ENCODE measurements at regions of chr3 and their contacts with region 1.

Region 1: DNA sequence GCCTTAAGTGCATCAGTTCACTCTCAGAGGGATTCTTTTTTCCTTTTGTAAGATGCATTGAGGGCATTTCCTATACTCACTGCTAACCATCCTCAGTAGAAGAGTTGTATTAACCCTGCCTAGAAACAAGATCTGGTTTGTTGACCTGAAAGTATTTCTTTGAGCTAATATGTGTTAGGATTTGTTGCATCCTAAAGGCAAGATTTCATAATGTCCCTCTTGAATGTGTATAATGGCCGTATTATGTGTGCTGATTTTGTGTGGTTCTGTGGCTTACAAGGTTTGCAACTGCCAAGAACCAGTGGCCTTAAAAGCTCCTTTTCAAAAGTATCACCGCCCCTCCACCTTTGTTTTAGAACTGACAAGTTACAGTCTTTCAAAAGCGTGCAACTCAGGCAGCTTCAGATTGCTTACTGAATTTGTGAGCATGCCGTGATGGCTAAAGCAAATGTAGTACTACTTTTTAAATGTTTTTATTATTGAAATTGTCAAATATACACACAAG is 182.0 kb upstream of the BHLHE40 start:
- DNase-seq: no peak
- ATAC-seq: no peak
- H3K4me3 ChIP-seq: no peak overlapping the region
- H3K27ac ChIP-seq: no peak overlapping the region
- H3K4me1 ChIP-seq: no peaks in the 10 kb centered on the region
- H3K27me3 ChIP-seq: no peaks in the 10 kb centered on the region
- CTCF ChIP-seq: no peak
- EP300 ChIP-seq: no peak
- POLR2A ChIP-seq: no peak
- RAD21 ChIP-seq: no peak

Region 2: GRCh38 chr3:4730719-4731118 is 66.5 kb before region 1 on chr3:
- CTCF ChIA-PET with region 1: no interaction called
- POLR2A ChIA-PET with region 1: no interaction called
- RAD21 ChIA-PET with region 1: no interaction called
- SMC1A ChIA-PET with region 1: no interaction called
- in situ Hi-C with region 1: no loop called
- intact Hi-C with region 1: no loop called
- DNase-seq: no peak
- ATAC-seq: no peak
- H3K4me3 ChIP-seq: no peak overlapping the region
- H3K27ac ChIP-seq: no peak overlapping the region
- H3K4me1 ChIP-seq: no peaks in the 10 kb centered on the region
- H3K27me3 ChIP-seq: no peaks in the 10 kb centered on the region
- CTCF ChIP-seq: no peak
- EP300 ChIP-seq: no peak
- POLR2A ChIP-seq: no peak
- RAD21 ChIP-seq: no peak

Region 3: GRCh38 chr3:4786431-4786830 is 10.8 kb before region 1 on chr3:
- CTCF ChIA-PET with region 1: interaction called, 3 read pairs
- POLR2A ChIA-PET with region 1: no interaction called
- RAD21 ChIA-PET with region 1: interaction called, 3 read pairs
- SMC1A ChIA-PET with region 1: interaction called, 12 read pairs
- in situ Hi-C with region 1: no loop called
- intact Hi-C with region 1: no loop called
- DNase-seq: no peak
- ATAC-seq: no peak
- H3K4me3 ChIP-seq: no peak overlapping the region
- H3K27ac ChIP-seq: no peak overlapping the region
- H3K4me1 ChIP-seq: no peaks in the 10 kb centered on the region
- H3K27me3 ChIP-seq: no peaks in the 10 kb centered on the region
- CTCF ChIP-seq: no peak
- EP300 ChIP-seq: no peak
- POLR2A ChIP-seq: no peak
- RAD21 ChIP-seq: no peak

Region 4: GRCh38 chr3:4807381-4808280 is 10.4 kb after region 1 on chr3:
- CTCF ChIA-PET with region 1: interaction called, 5 read pairs
- POLR2A ChIA-PET with region 1: no interaction called
- RAD21 ChIA-PET with region 1: interaction called, 6 read pairs
- SMC1A ChIA-PET with region 1: interaction called, 13 read pairs
- in situ Hi-C with region 1: no loop called
- intact Hi-C with region 1: no loop called
- DNase-seq: no peak
- ATAC-seq: no peak
- H3K4me3 ChIP-seq: no peak overlapping the region
- H3K27ac ChIP-seq: no peak overlapping the region
- H3K4me1 ChIP-seq: no peaks in the 10 kb centered on the region
- H3K27me3 ChIP-seq: no peaks in the 10 kb centered on the region
- CTCF ChIP-seq: no peak
- EP300 ChIP-seq: no peak
- POLR2A ChIP-seq: no peak
- RAD21 ChIP-seq: no peak